ENCODE measurements at regions of chr3 and their contacts with region 1.

Region 1: DNA sequence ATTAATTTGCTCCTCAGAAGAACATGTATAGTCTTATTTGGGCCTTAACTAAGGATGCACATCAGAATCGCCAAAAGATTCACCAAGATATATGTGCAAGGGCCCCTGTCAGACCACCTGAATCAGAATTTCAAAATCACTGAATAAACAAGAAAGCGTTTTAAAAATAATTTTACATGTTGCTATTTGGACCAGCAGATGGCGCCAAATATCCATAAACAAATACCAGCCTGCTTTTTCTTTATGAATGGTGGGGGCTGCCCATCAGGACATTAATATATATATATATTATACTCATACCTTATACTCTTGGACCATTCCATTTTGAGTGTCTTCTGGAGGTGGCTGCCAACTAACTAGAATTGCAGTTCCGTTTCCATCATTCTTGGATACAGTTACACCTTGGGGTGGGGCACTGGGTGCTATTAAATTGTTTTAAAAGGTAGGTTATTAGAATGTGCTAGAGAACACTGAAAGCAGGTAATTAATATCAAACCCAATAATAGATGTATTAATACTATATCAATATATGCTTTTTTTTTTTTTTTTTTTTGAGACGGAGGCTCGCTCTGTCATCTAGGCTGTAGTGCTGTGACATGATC is 1108.3 kb downstream of the ROBO1 start:
- DNase-seq: no peak
- ATAC-seq: no peak
- H3K4me3 Mint-ChIP-seq: no peak overlapping the region
- H3K27ac Mint-ChIP-seq: no peak overlapping the region
- H3K4me1 Mint-ChIP-seq: no peaks in the 10 kb centered on the region
- H3K27me3 Mint-ChIP-seq: no peaks in the 10 kb centered on the region
- CTCF ChIP-seq: peak; percentile 78

Region 2: DNA sequence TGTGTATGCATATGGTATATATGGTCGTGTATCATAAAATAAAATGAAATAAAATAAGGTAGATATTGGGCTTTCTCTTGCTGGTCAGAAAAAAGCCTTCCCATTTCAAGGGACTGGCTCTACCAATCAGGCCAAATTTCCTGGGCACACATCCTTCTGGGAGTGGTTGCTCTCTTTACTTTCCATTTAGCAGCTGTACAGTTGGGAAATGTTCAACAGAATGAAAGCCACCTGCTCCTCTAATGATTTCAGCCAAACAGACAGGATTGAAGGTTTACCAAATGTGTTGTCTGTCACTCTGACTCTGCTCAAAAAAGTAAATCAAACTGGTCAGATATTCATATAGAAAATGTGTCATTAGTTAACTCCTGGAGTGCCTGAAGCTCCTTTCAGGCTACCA is 1239.2 kb before region 1 on chr3:
- CTCF ChIA-PET with region 1: no interaction called
- POLR2A ChIA-PET with region 1: no interaction called
- intact Hi-C with region 1: no loop called
- DNase-seq: no peak
- ATAC-seq: no peak
- H3K4me3 Mint-ChIP-seq: no peak overlapping the region
- H3K27ac Mint-ChIP-seq: no peak overlapping the region
- H3K4me1 Mint-ChIP-seq: no peaks in the 10 kb centered on the region
- H3K27me3 Mint-ChIP-seq: no peaks in the 10 kb centered on the region
- CTCF ChIP-seq: no peak

Region 3: DNA sequence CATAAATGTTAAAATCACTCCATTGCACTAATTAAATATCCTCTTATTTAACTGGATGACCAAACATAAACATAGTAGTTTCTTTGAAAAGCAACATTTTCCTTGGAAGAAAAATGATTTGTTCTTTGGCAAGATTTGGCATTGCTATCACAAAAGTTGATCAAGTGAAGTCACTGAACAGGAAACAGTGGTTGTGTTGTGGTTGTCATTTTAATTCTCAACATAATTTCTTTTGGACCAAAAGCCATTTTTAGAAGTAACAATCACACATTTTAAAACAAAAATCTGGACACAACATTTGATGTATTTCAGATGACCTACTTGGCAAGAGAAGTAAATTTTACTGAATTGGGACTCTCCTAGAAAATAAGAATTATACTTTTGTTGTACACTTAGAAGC is 236.0 kb after region 1 on chr3:
- CTCF ChIA-PET with region 1: no interaction called
- POLR2A ChIA-PET with region 1: no interaction called
- intact Hi-C with region 1: no loop called
- DNase-seq: no peak
- ATAC-seq: no peak
- H3K4me3 Mint-ChIP-seq: no peak overlapping the region
- H3K27ac Mint-ChIP-seq: no peak overlapping the region
- H3K4me1 Mint-ChIP-seq: no peaks in the 10 kb centered on the region
- H3K27me3 Mint-ChIP-seq: no peaks in the 10 kb centered on the region
- CTCF ChIP-seq: no peak

Region 4: DNA sequence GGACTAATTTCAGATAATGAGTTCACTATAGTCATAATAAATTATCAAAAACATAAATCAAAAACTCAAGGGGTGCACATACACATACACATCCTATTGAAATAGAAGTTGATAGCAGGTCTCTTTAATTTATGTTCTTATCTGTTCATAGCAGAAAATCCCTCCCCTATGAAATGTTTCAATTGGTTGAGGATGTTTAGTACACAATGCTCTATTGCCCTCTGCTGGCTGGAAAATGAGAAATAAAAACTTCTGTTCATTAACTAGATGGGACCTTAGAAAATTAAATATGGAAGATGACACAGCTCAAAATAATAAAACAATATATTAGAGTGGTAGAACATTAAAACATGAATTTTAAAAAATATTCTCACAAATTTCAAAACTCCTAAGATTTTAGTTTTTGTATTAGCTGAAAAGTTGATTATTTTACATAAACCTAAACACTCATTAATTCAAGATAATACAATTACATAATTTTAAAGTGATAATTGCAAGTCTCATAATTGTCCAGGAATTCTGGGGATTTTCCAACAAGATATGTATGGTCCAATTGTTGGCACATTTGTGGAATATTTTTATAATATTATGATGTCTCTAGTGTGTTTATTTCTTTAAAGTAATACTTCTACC is 373.3 kb after region 1 on chr3:
- CTCF ChIA-PET with region 1: interaction called, 3 read pairs
- POLR2A ChIA-PET with region 1: no interaction called
- intact Hi-C with region 1: loop called (anchors 1 kb)
- DNase-seq: no peak
- ATAC-seq: no peak
- H3K4me3 Mint-ChIP-seq: no peak overlapping the region
- H3K27ac Mint-ChIP-seq: no peak overlapping the region
- H3K4me1 Mint-ChIP-seq: no peaks in the 10 kb centered on the region
- H3K27me3 Mint-ChIP-seq: no peaks in the 10 kb centered on the region
- CTCF ChIP-seq: no peak

Region 5: DNA sequence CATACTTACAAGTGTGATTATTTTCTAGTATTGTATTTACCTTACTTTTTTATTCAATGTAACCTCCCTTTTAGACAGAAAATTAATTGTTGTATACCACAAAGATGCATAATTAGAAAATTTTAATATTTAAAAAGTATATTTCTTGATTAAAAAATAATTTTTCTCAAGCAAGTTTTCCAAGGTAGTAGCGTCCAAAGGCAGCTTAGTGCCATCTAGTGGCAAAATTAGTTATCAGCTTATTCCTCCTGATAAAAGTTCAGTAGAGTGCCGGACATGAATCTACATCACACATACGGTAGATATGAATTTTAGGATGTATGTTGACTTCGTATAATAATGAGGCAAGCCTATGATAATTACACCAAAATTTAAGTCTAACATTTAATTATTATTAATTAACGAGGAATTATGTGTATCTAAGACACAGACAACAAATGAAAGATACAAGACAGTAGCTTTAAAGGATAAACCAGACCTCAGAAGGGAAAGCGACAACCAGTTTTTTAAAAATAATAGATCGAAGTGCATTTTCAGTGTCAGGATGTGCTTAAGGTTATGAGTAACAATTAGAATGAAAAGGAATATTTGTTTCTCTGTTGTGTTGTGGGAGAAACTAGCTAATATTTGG is 702.4 kb after region 1 on chr3:
- CTCF ChIA-PET with region 1: no interaction called
- POLR2A ChIA-PET with region 1: no interaction called
- intact Hi-C with region 1: loop called (anchors 2 kb)
- DNase-seq: no peak
- ATAC-seq: no peak
- H3K4me3 Mint-ChIP-seq: no peak overlapping the region
- H3K27ac Mint-ChIP-seq: no peak overlapping the region
- H3K4me1 Mint-ChIP-seq: no peaks in the 10 kb centered on the region
- H3K27me3 Mint-ChIP-seq: no peaks in the 10 kb centered on the region
- CTCF ChIP-seq: peak; percentile 68

Region 6: GRCh38 chr3:79497447-79498111 is 838.1 kb after region 1 on chr3:
- CTCF ChIA-PET with region 1: no interaction called
- POLR2A ChIA-PET with region 1: no interaction called
- intact Hi-C with region 1: loop called (anchors 5 kb)
- DNase-seq: no peak
- ATAC-seq: no peak
- H3K4me3 Mint-ChIP-seq: no peak overlapping the region
- H3K27ac Mint-ChIP-seq: no peak overlapping the region
- H3K4me1 Mint-ChIP-seq: no peaks in the 10 kb centered on the region
- H3K27me3 Mint-ChIP-seq: no peaks in the 10 kb centered on the region
- CTCF ChIP-seq: no peak

Region 7: GRCh38 chr3:79551995-79552394 is 892.5 kb after region 1 on chr3:
- CTCF ChIA-PET with region 1: no interaction called
- POLR2A ChIA-PET with region 1: no interaction called
- intact Hi-C with region 1: no loop called
- DNase-seq: no peak
- ATAC-seq: no peak
- H3K4me3 Mint-ChIP-seq: no peak overlapping the region
- H3K27ac Mint-ChIP-seq: no peak overlapping the region
- H3K4me1 Mint-ChIP-seq: no peaks in the 10 kb centered on the region
- H3K27me3 Mint-ChIP-seq: no peaks in the 10 kb centered on the region
- CTCF ChIP-seq: no peak

Measured in activated B cell treated with CpG ODN at 0.5 μM for 24 hours (primary cell).